Endothelial cell of umbilical vein (primary cell): ENCODE measurements at regions of chr6 and their contacts with region 1.

Region 1: DNA sequence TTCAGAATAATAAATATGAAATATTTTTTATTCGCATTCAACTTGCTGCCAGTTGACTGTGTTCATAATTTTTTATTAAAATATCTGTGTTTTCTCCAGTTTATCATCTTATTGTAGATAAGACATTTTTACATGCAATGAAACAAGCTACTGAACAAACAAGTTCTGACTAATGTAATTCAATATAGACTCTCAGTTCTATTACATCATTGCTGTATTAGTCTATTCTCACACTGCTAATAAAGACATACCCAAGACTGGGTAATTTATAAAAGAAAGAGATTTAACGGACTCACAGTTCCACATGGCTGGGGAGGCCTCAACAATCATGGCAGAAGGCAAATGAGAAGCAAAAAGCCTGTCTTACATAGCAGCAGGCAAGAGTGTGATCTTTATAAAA is 1357.7 kb upstream of the CITED2 start:
- DNase-seq: no peak
- H3K4me3 ChIP-seq: no peak overlapping the region
- H3K27ac ChIP-seq: no peak overlapping the region
- H3K4me1 ChIP-seq: no peaks in the 10 kb centered on the region
- H3K27me3 ChIP-seq: no peaks in the 10 kb centered on the region
- CTCF ChIP-seq: no peak
- POLR2A ChIP-seq: no peak

Region 2: GRCh38 chr6:140677781-140678528 is 54.2 kb before region 1 on chr6:
- CTCF ChIA-PET with region 1: no interaction called
- POLR2A ChIA-PET with region 1: no interaction called
- dilution Hi-C with region 1: no loop called
- intact Hi-C with region 1: no loop called
- DNase-seq: peak; percentile 13
- H3K4me3 ChIP-seq: no peak overlapping the region
- H3K27ac ChIP-seq: no peak overlapping the region
- H3K4me1 ChIP-seq: no peaks in the 10 kb centered on the region
- H3K27me3 ChIP-seq: no peaks in the 10 kb centered on the region
- CTCF ChIP-seq: no peak
- POLR2A ChIP-seq: no peak

Region 3: DNA sequence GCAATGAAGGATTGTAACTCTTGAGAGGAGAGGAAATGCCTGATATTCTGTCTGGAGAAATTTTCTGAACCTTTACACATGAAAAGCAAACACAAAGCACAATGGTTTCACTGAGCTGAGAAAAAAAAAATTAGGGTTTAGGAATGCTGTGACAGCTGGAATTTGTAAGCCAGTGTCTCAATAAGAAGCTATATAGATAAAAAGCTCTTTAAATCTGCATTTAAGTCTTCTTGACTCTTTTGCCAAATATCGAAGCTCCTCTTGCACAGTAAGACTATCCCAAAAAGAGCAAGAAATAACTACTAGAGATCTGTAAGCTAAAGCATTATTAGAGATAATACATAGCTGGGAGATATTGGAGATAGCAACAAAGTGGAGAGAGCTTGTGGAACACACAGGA is 23.7 kb before region 1 on chr6:
- CTCF ChIA-PET with region 1: interaction called, 3 read pairs
- POLR2A ChIA-PET with region 1: no interaction called
- dilution Hi-C with region 1: no loop called
- intact Hi-C with region 1: loop called (anchors 1 kb)
- DNase-seq: no peak
- H3K4me3 ChIP-seq: no peak overlapping the region
- H3K27ac ChIP-seq: no peak overlapping the region
- H3K4me1 ChIP-seq: no peaks in the 10 kb centered on the region
- H3K27me3 ChIP-seq: no peaks in the 10 kb centered on the region
- CTCF ChIP-seq: no peak
- POLR2A ChIP-seq: no peak